ENCODE measurements at regions of chr1 and their contacts with region 1.

Region 1: DNA sequence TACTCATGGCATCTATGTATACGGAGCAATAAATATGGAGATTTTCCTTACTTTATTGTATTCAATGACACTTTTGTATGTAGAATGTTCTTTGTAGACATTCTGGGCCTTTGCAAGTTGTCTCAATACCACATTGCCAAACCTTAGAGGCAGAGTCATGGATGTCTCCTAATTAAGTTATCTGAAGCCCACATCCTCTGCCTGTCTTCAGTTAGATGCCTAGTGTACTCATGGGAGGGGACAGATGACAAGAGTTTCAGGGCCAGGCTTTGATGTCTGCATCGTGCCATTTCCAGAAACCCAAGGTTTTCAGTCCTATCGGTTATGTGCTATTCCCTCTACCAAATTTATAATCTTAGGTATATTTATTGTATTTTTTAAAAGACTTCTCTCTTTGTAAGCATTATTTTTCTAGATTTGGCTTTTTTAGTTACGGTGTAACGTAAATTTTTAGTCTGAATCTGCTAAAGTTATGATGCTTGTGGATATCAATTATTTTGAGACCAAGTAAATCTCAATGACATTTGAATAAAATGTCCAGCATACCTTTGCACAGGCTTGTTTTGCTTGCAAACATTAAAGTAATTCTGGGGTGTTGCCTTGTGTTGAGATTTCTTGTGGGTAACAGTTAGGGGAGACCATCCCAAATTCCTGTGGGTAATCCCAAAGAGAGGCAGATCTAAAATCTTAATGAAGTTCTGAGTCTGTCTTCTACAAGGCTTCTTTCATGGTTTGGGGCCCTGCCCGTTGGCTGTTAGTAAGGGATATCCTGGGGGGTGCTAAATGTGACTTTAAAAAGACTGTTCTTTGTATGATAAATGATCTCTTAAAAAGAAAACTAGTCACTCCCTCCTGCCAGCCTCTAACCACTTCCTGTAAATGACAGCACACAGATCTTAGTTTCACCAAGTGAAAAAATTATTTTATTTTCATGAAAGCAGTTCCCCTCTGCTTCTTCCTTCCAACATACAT is 8.0 kb upstream of the MACF1 start:
- DNase-seq: peak; percentile 78
- H3K4me3 Mint-ChIP-seq: peak overlapping the region; percentile 58
- H3K27ac Mint-ChIP-seq: peak overlapping the region; percentile 98
- H3K4me1 Mint-ChIP-seq: peaks cover 72% of the 10 kb centered on the region
- H3K27me3 Mint-ChIP-seq: no peaks in the 10 kb centered on the region

Region 2: GRCh38 chr1:38026592-38027200 is 1169.8 kb before region 1 on chr1:
- CTCF ChIA-PET with region 1: no interaction called
- POLR2A ChIA-PET with region 1: no interaction called
- intact Hi-C with region 1: loop called (anchors 10 kb)
- DNase-seq: peak; percentile 79
- H3K4me3 Mint-ChIP-seq: no peak overlapping the region
- H3K27ac Mint-ChIP-seq: no peak overlapping the region
- H3K4me1 Mint-ChIP-seq: peaks cover 50% of the 10 kb centered on the region
- H3K27me3 Mint-ChIP-seq: no peaks in the 10 kb centered on the region

Region 3: DNA sequence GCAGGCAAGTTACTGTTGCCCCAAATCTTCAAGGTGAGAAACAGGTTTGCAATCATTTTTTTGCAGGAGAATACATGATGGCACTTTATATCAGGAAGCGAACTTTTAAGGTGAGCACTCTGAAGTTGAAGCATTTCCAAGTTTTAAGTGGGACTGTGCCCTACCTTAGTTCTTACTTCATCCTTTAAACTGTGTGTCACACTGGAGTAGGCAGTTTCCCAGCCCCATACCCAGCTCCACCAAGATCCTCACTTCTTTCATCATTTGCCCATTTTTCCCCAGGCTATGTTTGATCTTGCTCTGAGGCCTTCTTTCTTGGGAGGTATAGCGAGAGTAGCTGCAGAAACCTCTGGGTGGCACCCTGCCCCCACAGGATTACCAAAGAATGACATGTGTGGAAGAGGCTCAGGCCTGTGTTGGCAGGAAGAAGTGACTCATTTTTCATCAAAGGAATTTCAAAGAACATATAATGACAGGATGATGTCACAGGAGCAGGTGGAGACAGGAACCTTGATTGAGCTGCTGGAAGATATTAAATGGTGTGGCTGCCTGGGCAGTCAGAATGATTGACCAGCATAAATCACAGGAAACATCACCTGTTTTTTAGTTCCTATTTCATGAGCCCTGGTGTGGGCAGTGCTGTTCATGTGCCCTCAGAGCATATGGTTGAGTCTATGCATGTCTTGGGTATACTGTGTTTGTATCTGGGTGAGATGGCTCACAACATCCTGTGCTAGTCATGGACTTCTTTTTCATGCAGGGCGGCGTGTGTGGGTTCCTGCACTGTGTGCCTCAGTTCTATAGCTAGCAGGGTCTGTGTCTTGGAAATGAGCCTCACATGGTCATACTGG is 12.8 kb before region 1 on chr1:
- CTCF ChIA-PET with region 1: interaction called, 34 read pairs
- POLR2A ChIA-PET with region 1: interaction called, 8 read pairs
- intact Hi-C with region 1: loop called (anchors 1 kb)
- DNase-seq: peak; percentile 91
- H3K4me3 Mint-ChIP-seq: peak overlapping the region; percentile 11
- H3K27ac Mint-ChIP-seq: peak overlapping the region; percentile 91
- H3K4me1 Mint-ChIP-seq: peaks cover 51% of the 10 kb centered on the region
- H3K27me3 Mint-ChIP-seq: no peaks in the 10 kb centered on the region

Region 4: DNA sequence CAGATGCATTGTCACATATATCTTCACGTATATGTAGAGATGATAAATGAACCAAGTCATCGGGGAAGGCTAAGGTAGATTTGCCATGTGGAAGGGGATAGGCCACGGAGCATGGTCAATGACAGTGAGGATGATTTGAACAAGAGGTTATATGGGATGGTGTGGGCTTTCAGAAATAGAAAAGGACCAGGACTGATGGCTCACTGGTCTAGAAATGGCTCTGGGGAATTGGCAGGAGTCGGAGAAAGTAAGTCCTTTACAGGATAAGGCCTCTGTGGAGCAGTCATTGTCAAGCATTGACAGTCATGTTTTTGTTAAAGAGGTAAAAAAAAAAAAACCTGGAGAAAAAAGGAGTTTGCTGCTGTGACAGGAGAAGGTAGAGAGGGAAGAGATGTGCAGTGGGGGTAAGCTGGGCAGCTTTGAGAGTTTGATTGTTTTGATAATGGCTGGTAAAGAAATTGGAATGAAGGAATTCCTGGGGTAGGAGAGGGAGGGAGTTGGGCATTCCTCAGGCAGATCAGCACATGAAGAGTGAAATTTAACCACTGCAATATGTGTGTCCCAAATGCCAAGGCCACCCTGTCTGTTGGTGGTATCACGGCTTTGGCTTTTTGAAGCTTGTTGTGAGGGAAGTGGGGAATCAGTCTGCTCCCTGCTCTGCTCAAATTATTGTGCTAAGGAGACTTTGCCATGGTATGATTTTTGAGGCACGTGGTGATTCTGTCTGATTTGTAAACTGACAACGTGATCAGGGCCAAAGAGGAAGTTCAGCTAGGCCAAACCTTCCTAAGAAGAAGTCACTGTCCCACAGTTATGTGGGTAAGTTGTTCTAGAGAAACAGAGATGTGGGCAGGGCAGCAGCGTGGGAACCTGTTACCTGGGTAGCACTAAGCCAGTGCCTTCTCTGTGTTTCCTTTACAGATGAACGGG is 34.0 kb after region 1 on chr1:
- CTCF ChIA-PET with region 1: interaction called, 17 read pairs
- POLR2A ChIA-PET with region 1: interaction called, 7 read pairs
- intact Hi-C with region 1: no loop called
- DNase-seq: peak; percentile 59
- H3K4me3 Mint-ChIP-seq: peak overlapping the region; percentile 46
- H3K27ac Mint-ChIP-seq: peak overlapping the region; percentile 72
- H3K4me1 Mint-ChIP-seq: peaks cover 57% of the 10 kb centered on the region
- H3K27me3 Mint-ChIP-seq: no peaks in the 10 kb centered on the region

Region 5: GRCh38 chr1:39258146-39258924 is 61.8 kb after region 1 on chr1:
- CTCF ChIA-PET with region 1: interaction called, 320 read pairs
- POLR2A ChIA-PET with region 1: interaction called, 17 read pairs
- intact Hi-C with region 1: loop called (anchors 1 kb)
- DNase-seq: peak; percentile 74
- H3K4me3 Mint-ChIP-seq: no peak overlapping the region
- H3K27ac Mint-ChIP-seq: peak overlapping the region; percentile 56
- H3K4me1 Mint-ChIP-seq: peaks cover 44% of the 10 kb centered on the region
- H3K27me3 Mint-ChIP-seq: no peaks in the 10 kb centered on the region

Region 6: DNA sequence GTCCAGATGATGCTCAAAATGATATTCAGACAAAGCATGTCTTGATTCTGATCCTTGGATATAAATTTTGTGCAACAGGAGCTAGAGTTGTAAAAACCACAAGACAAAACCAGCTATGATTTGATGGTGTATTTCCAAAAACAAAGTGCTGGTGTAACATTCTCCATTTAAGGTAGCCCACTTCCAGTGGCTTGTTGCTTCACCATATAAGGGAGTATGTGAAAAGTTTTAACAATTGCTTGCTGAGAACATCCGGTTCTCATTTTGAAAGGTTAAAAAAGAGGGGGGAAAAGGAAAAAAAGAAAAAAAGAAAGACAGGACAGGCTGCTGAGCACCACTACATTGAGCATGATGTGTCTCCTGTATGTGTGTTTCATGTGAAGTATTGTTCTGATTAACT is 131.6 kb after region 1 on chr1:
- CTCF ChIA-PET with region 1: interaction called, 5 read pairs
- POLR2A ChIA-PET with region 1: no interaction called
- intact Hi-C with region 1: loop called (anchors 2 kb)
- DNase-seq: no peak
- H3K4me3 Mint-ChIP-seq: peak overlapping the region; percentile 7
- H3K27ac Mint-ChIP-seq: peak overlapping the region; percentile 79
- H3K4me1 Mint-ChIP-seq: peaks cover 40% of the 10 kb centered on the region
- H3K27me3 Mint-ChIP-seq: no peaks in the 10 kb centered on the region

Region 7: GRCh38 chr1:39666772-39667171 is 470.2 kb after region 1 on chr1:
- CTCF ChIA-PET with region 1: no interaction called
- POLR2A ChIA-PET with region 1: no interaction called
- intact Hi-C with region 1: loop called (anchors 10 kb)
- DNase-seq: peak; percentile 71
- H3K4me3 Mint-ChIP-seq: no peak overlapping the region
- H3K27ac Mint-ChIP-seq: peak overlapping the region; percentile 47
- H3K4me1 Mint-ChIP-seq: peaks cover 20% of the 10 kb centered on the region
- H3K27me3 Mint-ChIP-seq: peaks cover 27% of the 10 kb centered on the region